ENCODE measurements at regions of chr21 and their contacts with region 1.

Region 1: GRCh38 chr21:37563641-37564340 is 197.2 kb downstream of the DYRK1A start:
- DNase-seq: peak; percentile 86
- ATAC-seq: peak; percentile 88
- H3K4me3 Mint-ChIP-seq: peak overlapping the region; percentile 93
- H3K27ac Mint-ChIP-seq: peak overlapping the region; percentile 96
- H3K4me1 Mint-ChIP-seq: peaks cover 21% of the 10 kb centered on the region
- H3K27me3 Mint-ChIP-seq: no peaks in the 10 kb centered on the region
- CTCF ChIP-seq: no peak

Region 2: GRCh38 chr21:37072988-37073416 is 490.8 kb before region 1 on chr21 and contains the starts of genes PIGP and TTC3:
- CTCF ChIA-PET with region 1: no interaction called
- POLR2A ChIA-PET with region 1: interaction called, 7 read pairs
- intact Hi-C with region 1: loop called (anchors 1 kb)
- DNase-seq: peak; percentile 99
- ATAC-seq: peak; percentile 63
- H3K4me3 Mint-ChIP-seq: peak within 1 kb of the TSS; percentile 87
- H3K27ac Mint-ChIP-seq: peak within 1 kb of the TSS; percentile 93
- H3K4me1 Mint-ChIP-seq: peaks cover 44% of the 10 kb centered on the region
- H3K27me3 Mint-ChIP-seq: no peaks in the 10 kb centered on the region
- CTCF ChIP-seq: no peak
- total RNA-seq, gene PIGP: 17.3 and 17.7 TPM in 2 replicates
- total RNA-seq, gene TTC3: 61.1 and 69.8 TPM in 2 replicates

Region 3: GRCh38 chr21:37267269-37268184 is 296.3 kb before region 1 on chr21 and contains the start of gene VPS26C:
- CTCF ChIA-PET with region 1: no interaction called
- POLR2A ChIA-PET with region 1: interaction called, 20 read pairs
- intact Hi-C with region 1: loop called (anchors 1 kb)
- DNase-seq: peak; percentile 94
- ATAC-seq: peak; percentile 86
- H3K4me3 Mint-ChIP-seq: peak within 1 kb of the TSS; percentile 96
- H3K27ac Mint-ChIP-seq: peak within 1 kb of the TSS; percentile 97
- H3K4me1 Mint-ChIP-seq: peaks cover 29% of the 10 kb centered on the region
- H3K27me3 Mint-ChIP-seq: peaks cover 6% of the 10 kb centered on the region
- CTCF ChIP-seq: no peak
- total RNA-seq, gene VPS26C: 42.5 and 45.2 TPM in 2 replicates

Region 4: GRCh38 chr21:37509802-37510393 is 53.9 kb before region 1 on chr21:
- CTCF ChIA-PET with region 1: interaction called, 3 read pairs
- POLR2A ChIA-PET with region 1: interaction called, 3 read pairs
- intact Hi-C with region 1: loop called (anchors 5 kb)
- DNase-seq: no peak
- ATAC-seq: no peak
- H3K4me3 Mint-ChIP-seq: no peak overlapping the region
- H3K27ac Mint-ChIP-seq: no peak overlapping the region
- H3K4me1 Mint-ChIP-seq: peaks cover 12% of the 10 kb centered on the region
- H3K27me3 Mint-ChIP-seq: no peaks in the 10 kb centered on the region
- CTCF ChIP-seq: no peak

Region 5: GRCh38 chr21:39183237-39184007 is 1619.6 kb after region 1 on chr21 and contains the start of gene PSMG1:
- CTCF ChIA-PET with region 1: no interaction called
- POLR2A ChIA-PET with region 1: interaction called, 5 read pairs
- intact Hi-C with region 1: loop called (anchors 2 kb)
- DNase-seq: peak; percentile 97
- ATAC-seq: peak; percentile 91
- H3K4me3 Mint-ChIP-seq: peak within 1 kb of the TSS; percentile 98
- H3K27ac Mint-ChIP-seq: peak within 1 kb of the TSS; percentile 94
- H3K4me1 Mint-ChIP-seq: peaks cover 20% of the 10 kb centered on the region
- H3K27me3 Mint-ChIP-seq: no peaks in the 10 kb centered on the region
- CTCF ChIP-seq: no peak
- total RNA-seq, gene PSMG1: 23.7 and 28.4 TPM in 2 replicates

Region 6: DNA sequence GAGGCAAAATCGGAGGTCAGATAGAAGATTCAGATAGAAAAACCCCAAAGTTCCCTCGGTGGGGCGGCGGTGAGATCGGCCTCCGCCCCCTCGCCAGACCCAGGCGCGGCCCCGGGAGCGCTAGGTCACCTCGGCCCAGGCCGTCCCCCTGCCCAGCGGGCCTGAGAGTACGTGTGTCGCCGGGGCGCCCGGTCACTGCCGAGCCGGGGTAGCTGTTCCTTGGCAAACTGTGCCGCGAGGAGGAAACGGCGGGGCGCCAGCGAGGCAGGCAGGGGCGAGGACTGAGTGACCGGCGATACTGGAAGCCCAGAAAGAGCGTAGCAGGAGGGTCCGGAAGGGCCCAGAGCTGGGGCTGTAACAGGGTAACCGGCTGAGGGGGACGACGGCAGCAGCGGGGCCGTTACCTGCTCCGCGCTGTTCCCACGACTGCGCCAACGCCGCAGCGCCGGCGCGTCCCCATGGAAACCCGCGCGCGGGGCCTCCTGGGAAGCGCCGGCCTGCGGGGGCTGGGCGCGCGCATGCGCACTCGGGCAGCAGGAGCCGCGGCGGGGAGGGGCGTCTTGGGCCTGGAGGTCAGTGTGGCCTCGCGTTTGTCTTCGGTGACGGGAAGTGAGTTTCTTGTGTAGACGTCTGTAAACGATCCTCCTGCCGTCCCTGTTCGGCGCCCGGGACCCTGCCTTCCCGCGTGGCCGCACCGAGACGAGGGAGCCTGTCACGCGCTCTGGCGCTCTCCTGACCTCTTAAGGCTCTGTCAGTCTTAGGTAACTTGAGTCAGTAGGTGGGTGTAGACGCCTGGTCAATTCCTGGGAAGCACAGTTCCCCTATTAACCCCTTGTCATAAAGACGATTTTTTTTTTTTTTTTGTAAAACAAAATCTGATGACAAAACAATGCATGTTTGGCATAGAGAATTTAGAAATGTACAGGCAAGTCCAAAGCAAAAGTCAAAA is 1881.8 kb after region 1 on chr21 and contains the start of gene LCA5L:
- CTCF ChIA-PET with region 1: no interaction called
- POLR2A ChIA-PET with region 1: no interaction called
- intact Hi-C with region 1: loop called (anchors 2 kb)
- DNase-seq: peak; percentile 95
- ATAC-seq: peak; percentile 91
- H3K4me3 Mint-ChIP-seq: peak within 1 kb of the TSS; percentile 94
- H3K27ac Mint-ChIP-seq: peak within 1 kb of the TSS; percentile 95
- H3K4me1 Mint-ChIP-seq: peaks cover 12% of the 10 kb centered on the region
- H3K27me3 Mint-ChIP-seq: peaks cover 12% of the 10 kb centered on the region
- CTCF ChIP-seq: no peak
- total RNA-seq, gene LCA5L: 0.33 and 0.86 TPM in 2 replicates

Measured in activated B cell treated with CpG ODN at 0.5 μM for 24 hours (primary cell).